ENCODE measurements at regions of chr9 and their contacts with region 1.

Region 1: DNA sequence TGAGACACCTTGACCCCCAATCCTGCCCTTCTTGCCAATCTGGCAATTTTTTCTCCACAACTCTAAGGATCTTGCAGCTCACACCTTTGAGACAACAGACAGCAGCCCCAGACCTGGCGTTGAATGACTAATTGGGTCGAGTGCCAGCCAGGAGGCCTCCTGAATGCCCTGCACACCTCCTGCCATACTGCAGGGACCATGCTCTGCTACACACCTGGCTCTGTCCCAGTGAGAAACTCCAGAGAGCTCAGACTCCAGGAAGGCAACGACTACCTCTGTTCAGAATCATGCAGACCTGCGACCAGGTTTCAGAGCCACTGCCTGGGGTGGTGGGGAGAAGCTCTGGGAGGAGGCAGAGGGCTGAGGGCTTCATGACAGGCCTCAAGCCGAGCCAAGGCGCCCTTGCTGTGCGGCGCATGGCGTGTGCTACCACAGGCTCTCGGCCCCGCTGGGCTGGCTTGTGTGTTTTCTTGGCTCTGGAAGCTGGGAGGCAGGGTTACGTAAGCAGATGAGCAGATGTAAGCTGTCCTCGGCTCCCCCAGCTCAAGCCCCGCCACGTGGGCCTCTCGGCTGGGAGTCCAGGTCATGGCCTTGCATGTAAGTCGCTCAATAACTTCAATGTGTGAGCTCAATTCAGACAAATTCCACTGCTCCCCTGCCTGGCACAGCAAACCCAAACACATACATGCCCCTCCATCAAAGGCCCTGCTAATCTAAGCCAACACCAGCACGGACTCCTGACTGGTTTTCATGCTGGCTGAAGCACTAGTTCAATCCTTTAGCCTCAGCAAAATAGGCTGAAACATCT is 27.5 kb downstream of the B4GALT1 start:
- DNase-seq: no peak
- ATAC-seq: peak in 1 of 2 experiments; percentile 8; a peak in 2 of 6 replicates
- H3K4me3 ChIP-seq: no peak overlapping the region
- H3K27ac ChIP-seq: peak overlapping the region in 1 of 2 experiments; percentile 44; a peak in 3 of 6 replicates
- H3K4me1 ChIP-seq: peaks cover 89% of the 10 kb centered on the region
- CTCF ChIP-seq: no peak
- EP300 ChIP-seq: no peak
- POLR2A ChIP-seq: no peak
- RAD21 ChIP-seq: no peak

Region 2: GRCh38 chr9:33125871-33126822 is 13.5 kb before region 1 on chr9:
- CTCF ChIA-PET with region 1: interaction called, 14 read pairs
- POLR2A ChIA-PET with region 1: no interaction called
- DNase-seq: peak in 1 of 2 experiments; percentile 36
- ATAC-seq: peak; percentile 48 to 60; a peak in 3 of 6 replicates
- H3K4me3 ChIP-seq: no peak overlapping the region
- H3K27ac ChIP-seq: peak overlapping the region in 1 of 2 experiments; percentile 39; a peak in 3 of 6 replicates
- H3K4me1 ChIP-seq: peaks cover 56% of the 10 kb centered on the region
- CTCF ChIP-seq: no peak
- EP300 ChIP-seq: no peak
- POLR2A ChIP-seq: no peak
- RAD21 ChIP-seq: no peak